ENCODE measurements at regions of chr11 and their contacts with region 1.

Region 1: GRCh38 chr11:57515332-57516060 is at the start of gene SLC43A1:
- DNase-seq: peak; percentile 25
- H3K27ac ChIP-seq: peak within 1 kb of the TSS; percentile 63
- CTCF ChIP-seq: no peak

Region 2: DNA sequence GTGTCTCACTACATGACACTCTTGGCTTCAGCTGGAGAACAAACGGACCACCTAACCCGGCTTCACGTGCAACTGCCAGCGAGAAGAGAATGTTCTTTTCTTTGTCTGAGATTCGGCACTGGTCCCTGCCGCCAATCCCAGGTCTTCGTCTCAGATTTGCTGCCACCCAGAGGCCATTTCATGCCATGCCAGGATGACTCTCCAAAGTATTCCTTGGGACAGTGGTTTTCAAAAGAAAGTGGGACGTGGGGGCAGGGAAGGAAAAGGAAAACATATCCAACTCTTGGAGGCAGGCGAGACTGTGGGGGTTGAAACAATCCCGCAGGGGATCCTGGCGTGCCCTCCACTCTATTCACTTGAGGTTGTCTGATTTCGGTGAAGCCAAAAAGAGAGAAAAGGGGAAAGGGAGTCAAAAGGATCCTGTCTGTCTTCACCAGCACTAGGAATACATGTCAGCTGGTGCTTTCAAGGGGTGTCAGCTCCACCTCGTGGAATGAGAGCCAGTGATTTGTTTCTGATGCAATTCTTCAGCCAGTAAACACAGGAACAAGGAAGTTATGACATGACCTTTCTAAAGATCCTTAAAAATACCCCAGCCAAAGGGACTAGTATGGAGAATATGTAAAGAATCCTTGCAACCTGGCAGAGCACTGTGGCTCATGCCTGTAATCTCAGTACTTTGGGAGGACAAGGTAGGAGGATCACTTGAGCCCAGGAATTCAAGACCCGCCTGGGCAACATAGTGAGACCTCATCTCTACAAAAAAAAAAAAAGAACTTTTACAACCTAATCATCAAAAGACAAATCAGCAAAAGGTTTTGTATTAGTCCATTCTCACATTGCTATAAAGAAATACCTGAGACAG is 237.4 kb before region 1 on chr11:
- CTCF ChIA-PET with region 1: no interaction called
- POLR2A ChIA-PET with region 1: no interaction called
- DNase-seq: peak; percentile 80
- H3K27ac ChIP-seq: peak overlapping the region; percentile 81
- CTCF ChIP-seq: peak; percentile 87

Region 3: DNA sequence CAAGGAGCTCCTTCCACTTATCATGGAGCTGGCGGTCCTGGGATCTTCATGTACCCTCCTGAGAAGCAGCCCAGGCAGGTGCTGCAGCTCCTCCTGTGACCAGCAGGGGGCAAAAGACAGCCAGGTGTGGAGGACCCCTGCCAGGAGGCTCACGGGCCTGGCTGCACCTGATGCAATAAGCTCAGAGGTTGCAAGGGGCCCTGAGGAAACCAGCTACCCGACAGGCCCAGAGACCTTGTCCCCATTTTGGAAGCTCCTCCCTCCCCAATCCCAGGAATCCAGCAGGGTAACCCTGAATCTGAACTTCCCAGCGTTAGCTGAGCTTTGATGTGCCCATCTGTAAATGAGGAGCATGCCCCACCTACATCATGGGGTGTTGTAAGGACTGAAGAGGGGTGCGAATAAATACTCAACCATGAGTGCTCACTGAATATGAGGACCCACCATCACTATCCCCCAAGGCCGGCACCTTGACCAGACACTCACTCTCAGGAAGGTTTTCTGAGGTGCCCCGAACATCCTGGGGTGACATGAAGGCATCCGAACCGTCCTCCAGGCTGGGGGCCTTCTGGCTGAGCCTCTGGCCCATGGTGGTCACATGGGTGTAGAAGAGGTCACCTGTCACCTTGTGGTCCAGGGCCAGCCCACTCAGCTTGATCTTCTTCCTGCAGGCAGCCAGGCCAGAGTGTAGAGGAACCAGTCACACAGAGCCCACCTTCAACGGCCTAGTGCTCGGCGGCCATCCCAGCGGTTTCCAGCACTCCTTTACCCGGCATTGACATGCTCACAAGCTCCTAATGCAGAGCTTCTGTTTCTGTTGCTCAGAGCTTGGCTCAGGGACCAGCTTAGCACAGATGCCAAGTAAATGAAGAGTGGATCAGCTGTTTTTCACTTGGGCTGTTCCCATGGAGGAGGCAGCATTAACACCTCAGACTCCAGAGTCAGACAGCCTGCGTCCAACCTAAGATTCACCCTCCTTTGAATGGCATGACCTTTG is 21.7 kb before region 1 on chr11:
- CTCF ChIA-PET with region 1: interaction called, 28 read pairs
- POLR2A ChIA-PET with region 1: interaction called, 3 read pairs
- DNase-seq: peak; percentile 60
- H3K27ac ChIP-seq: peak overlapping the region; percentile 55
- CTCF ChIP-seq: peak; percentile 82

Region 4: DNA sequence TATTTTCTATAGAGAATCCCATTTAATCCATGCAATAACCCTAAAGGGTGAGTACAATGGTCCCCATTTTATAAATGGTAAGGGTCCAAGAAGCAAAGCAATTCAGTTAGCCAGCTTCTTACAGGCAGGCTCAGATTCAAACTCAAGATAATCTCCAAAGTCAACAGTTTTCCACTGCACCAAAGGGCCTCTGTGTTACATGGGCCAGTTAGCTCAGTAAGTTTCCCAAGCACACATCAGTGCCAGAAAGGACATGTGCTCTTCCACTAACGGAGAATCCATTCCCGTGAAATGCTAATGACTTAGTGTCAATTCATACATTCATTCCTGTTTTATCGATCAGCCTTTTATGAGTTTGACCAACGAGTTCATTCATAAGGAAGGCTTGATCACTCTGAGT is 11.0 kb before region 1 on chr11:
- CTCF ChIA-PET with region 1: no interaction called
- POLR2A ChIA-PET with region 1: no interaction called
- DNase-seq: no peak
- H3K27ac ChIP-seq: no peak overlapping the region
- CTCF ChIP-seq: no peak

Measured in RWPE1 (cell line).